K562 (cell line): ENCODE measurements at regions of chr4 and their contacts with region 1.

Region 1: DNA sequence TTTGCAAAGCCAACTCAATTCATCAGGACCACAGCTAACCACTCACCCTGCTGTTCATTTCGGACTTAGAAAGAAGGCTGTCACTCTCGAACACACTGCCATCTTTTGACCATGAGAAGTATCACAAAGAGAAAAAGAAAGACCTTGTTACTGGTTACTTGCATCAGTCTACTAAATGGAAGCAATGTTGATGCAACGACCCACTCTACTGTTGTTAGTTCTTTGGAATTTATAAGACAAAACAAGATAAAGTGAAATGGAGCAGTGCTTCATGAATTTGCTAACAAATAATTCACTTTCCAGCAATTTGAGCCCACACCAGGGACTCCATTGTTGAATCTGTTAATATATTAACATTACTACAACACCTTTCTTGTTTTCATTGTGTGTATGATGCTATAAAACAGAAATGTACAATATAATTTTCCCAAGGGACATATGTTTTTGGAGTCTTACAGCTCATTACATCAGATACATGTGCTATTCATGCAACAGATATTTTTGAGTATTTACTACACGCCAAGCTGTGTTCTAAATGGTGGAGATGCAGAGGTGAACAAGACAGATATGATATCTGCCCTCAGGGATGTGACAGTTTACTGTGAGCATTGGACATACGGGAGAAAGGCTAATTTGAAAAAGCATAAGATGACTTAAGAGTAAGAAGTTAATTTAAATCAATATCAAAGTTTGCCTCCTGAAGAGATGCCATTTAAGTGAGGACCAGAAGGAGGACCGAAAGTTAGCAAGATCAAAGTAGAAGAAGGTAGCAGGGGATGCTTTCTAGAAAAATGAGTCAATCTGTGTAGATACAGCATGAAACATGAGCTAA is 87.2 kb downstream of the AREG start:
- DNase-seq: peak; percentile 16 to 82 (median 45)
- ATAC-seq: peak; percentile 93
- H3K4me3 ChIP-seq: no peak overlapping the region
- H3K27ac ChIP-seq: peak overlapping the region; percentile 49; the same call in 2 of the 3 replicates
- H3K4me1 ChIP-seq: peaks cover 0 to 12% of the 10 kb centered on the region in 2 experiments; a peak in 1 of 5 replicates
- H3K27me3 ChIP-seq: no peaks in the 10 kb centered on the region
- CTCF ChIP-seq: peak; percentile 79 to 99 (median 98)
- EP300 ChIP-seq: peak; percentile 89
- POLR2A ChIP-seq: no peak
- RAD21 ChIP-seq: peak; percentile 95 to 96

Region 2: GRCh38 chr4:74189331-74190043 is 342.7 kb before region 1 on chr4:
- CTCF ChIA-PET with region 1: interaction called, 5 read pairs
- POLR2A ChIA-PET with region 1: no interaction called
- in situ Hi-C with region 1: no loop called
- intact Hi-C with region 1: loop called (anchors 5 kb)
- DNase-seq: peak; percentile 33 to 70 (median 42)
- ATAC-seq: peak; percentile 67
- H3K4me3 ChIP-seq: no peak overlapping the region
- H3K27ac ChIP-seq: no peak overlapping the region
- H3K4me1 ChIP-seq: no peaks in the 10 kb centered on the region
- H3K27me3 ChIP-seq: no peaks in the 10 kb centered on the region
- CTCF ChIP-seq: peak; percentile 46 to 75 (median 55); a peak in 5 of 6 replicates
- EP300 ChIP-seq: no peak
- POLR2A ChIP-seq: no peak
- RAD21 ChIP-seq: peak; percentile 67 to 69

Region 3: GRCh38 chr4:74320559-74321118 is 211.5 kb before region 1 on chr4:
- CTCF ChIA-PET with region 1: interaction called, 4 read pairs
- POLR2A ChIA-PET with region 1: no interaction called
- in situ Hi-C with region 1: loop called (anchors 10 kb)
- intact Hi-C with region 1: loop called (anchors 1 kb)
- DNase-seq: peak; percentile 17 to 77 (median 40)
- ATAC-seq: peak; percentile 73
- H3K4me3 ChIP-seq: no peak overlapping the region
- H3K27ac ChIP-seq: peak overlapping the region; percentile 2; the same call in 1 of the 3 replicates
- H3K4me1 ChIP-seq: peaks cover 5 to 30% of the 10 kb centered on the region in 2 experiments
- H3K27me3 ChIP-seq: no peaks in the 10 kb centered on the region
- CTCF ChIP-seq: peak; percentile 65 to 78 (median 68); a peak in 5 of 6 replicates
- EP300 ChIP-seq: no peak
- POLR2A ChIP-seq: no peak
- RAD21 ChIP-seq: peak; percentile 78 to 84

Region 4: GRCh38 chr4:74376888-74377483 is 155.2 kb before region 1 on chr4:
- CTCF ChIA-PET with region 1: interaction called, 20 read pairs
- POLR2A ChIA-PET with region 1: interaction called, 3 read pairs
- in situ Hi-C with region 1: loop called (anchors 10 kb)
- intact Hi-C with region 1: loop called (anchors 1 kb)
- DNase-seq: peak; percentile 28 to 72 (median 44)
- ATAC-seq: peak; percentile 83
- H3K4me3 ChIP-seq: no peak overlapping the region
- H3K27ac ChIP-seq: no peak overlapping the region
- H3K4me1 ChIP-seq: peaks cover 5 to 29% of the 10 kb centered on the region in 2 experiments; a peak in 3 of 5 replicates
- H3K27me3 ChIP-seq: no peaks in the 10 kb centered on the region
- CTCF ChIP-seq: peak in 2 of 3 experiments; percentile 63 to 82; a peak in 4 of 6 replicates
- EP300 ChIP-seq: no peak
- POLR2A ChIP-seq: no peak
- RAD21 ChIP-seq: peak; percentile 90 to 93

Region 5: GRCh38 chr4:74456056-74456744 is 76.0 kb before region 1 on chr4:
- CTCF ChIA-PET with region 1: no interaction called
- POLR2A ChIA-PET with region 1: no interaction called
- in situ Hi-C with region 1: no loop called
- intact Hi-C with region 1: loop called (anchors 2 kb)
- DNase-seq: no peak
- ATAC-seq: no peak
- H3K4me3 ChIP-seq: no peak overlapping the region
- H3K27ac ChIP-seq: no peak overlapping the region
- H3K4me1 ChIP-seq: peaks cover 5 to 21% of the 10 kb centered on the region in 2 experiments; a peak in 3 of 5 replicates
- H3K27me3 ChIP-seq: no peaks in the 10 kb centered on the region
- CTCF ChIP-seq: no peak
- EP300 ChIP-seq: no peak
- POLR2A ChIP-seq: no peak
- RAD21 ChIP-seq: no peak

Region 6: DNA sequence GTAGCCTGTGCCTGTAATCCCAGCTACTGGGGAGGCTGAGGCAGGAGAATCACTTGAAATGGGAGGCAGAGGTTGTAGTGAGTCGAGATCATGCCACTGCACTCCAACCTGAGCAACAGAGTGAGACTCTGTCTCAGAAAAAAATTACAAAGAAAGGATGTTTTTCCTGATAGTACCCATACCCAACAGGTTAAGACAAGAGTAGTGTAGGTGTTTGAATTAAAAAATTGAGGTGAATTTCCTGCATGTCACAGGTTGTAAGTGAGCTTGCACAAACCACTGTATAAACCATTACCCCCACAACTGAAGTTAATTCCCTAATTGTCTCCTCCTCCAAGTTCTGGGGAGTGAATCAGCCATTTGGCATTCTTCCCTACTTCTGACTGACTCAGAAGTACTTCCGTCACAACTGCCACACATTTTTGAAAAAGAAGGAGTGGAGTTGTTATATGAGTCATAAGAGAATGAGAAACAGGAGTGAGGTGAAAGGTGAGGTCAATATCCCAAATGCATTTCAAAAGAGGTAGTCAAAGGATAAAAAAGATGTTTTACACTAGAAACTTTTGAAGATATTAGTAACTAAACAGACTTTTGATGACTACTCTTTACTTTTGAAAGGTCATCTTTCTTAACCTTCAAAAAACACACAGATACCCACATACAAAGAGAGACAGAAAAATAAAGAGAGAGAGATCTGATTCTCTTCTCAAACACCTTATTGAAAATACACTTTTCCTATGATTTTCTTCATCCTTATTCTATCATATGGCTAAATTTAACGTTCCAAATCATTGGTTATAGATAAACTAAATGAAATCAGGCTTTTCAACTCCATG is 127.6 kb after region 1 on chr4:
- CTCF ChIA-PET with region 1: no interaction called
- POLR2A ChIA-PET with region 1: no interaction called
- in situ Hi-C with region 1: loop called (anchors 10 kb)
- intact Hi-C with region 1: no loop called
- DNase-seq: peak; percentile 13 to 82 (median 36)
- ATAC-seq: peak; percentile 81
- H3K4me3 ChIP-seq: no peak overlapping the region
- H3K27ac ChIP-seq: peak overlapping the region; percentile 70; the same call in 2 of the 3 replicates
- H3K4me1 ChIP-seq: peaks cover 0 to 4% of the 10 kb centered on the region in 2 experiments; a peak in 2 of 5 replicates
- H3K27me3 ChIP-seq: no peaks in the 10 kb centered on the region
- CTCF ChIP-seq: no peak
- EP300 ChIP-seq: peak; percentile 47; the same call in 1 of the 2 replicates
- POLR2A ChIP-seq: no peak
- RAD21 ChIP-seq: no peak